Ovary (tissue), 10 donors: ENCODE measurements at regions of chr6 and their contacts with region 1.

Region 1: DNA sequence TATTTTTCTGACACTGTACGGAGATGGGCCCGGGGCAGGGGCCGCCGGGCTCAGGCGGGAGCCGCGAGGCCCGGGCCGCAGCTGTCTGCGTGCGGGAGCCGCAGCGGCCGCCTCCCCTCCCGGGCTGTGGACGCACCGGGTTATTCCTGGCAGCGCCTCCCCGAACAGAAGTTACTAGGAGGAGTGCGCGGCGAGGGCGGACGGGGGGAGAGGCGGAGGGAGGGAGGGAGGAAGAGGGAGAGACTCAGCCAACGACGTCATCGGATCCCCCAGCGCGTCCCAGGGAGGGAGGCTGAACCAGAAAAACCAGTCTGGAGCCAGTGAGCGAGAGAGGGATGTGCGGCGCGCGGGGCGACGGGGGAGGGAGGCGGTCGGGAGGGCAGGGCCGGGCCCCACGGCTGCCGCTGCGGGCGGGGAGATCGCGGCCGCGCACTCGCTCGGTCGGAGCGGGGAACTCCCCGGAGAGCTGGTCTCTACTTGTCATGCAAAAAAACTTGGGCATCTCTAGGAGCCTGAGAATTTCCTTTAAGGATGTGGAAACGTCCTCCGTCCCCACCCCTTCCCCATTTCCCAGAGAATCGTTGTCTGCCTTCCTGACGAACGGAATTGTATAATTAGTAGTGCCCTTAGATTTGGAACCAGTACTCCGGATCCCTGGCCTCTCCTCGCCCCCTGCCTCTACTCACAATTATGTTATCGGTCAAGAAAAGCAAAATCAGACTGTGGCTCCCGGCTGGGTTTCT is 1.4 kb upstream of the HIVEP2 start:
- DNase-seq: peak; percentile 97 to 99 (median 99)
- H3K4me3 ChIP-seq: peak overlapping the region; percentile 88
- H3K27ac ChIP-seq: peak overlapping the region; percentile 99
- H3K4me1 ChIP-seq: no peaks in the 10 kb centered on the region
- H3K27me3 ChIP-seq: no peaks in the 10 kb centered on the region
- CTCF ChIP-seq: peak in 1 of 3 donors; percentile 21
- EP300 ChIP-seq: no peak
- POLR2A ChIP-seq: peak; percentile 95

Region 2: GRCh38 chr6:142692942-142693341 is 253.4 kb before region 1 on chr6:
- intact Hi-C with region 1: loop called in 3 of 4 experiments (anchors 5 to 10 kb)
- DNase-seq: peak; percentile 44 to 76 (median 66)
- H3K4me3 ChIP-seq: no peak overlapping the region
- H3K27ac ChIP-seq: peak overlapping the region in 1 of 2 donors; percentile 4
- H3K4me1 ChIP-seq: peaks cover 8% of the 10 kb centered on the region
- H3K27me3 ChIP-seq: no peaks in the 10 kb centered on the region
- CTCF ChIP-seq: peak; percentile 62 to 92 (median 87)
- EP300 ChIP-seq: no peak
- POLR2A ChIP-seq: no peak

Region 3: DNA sequence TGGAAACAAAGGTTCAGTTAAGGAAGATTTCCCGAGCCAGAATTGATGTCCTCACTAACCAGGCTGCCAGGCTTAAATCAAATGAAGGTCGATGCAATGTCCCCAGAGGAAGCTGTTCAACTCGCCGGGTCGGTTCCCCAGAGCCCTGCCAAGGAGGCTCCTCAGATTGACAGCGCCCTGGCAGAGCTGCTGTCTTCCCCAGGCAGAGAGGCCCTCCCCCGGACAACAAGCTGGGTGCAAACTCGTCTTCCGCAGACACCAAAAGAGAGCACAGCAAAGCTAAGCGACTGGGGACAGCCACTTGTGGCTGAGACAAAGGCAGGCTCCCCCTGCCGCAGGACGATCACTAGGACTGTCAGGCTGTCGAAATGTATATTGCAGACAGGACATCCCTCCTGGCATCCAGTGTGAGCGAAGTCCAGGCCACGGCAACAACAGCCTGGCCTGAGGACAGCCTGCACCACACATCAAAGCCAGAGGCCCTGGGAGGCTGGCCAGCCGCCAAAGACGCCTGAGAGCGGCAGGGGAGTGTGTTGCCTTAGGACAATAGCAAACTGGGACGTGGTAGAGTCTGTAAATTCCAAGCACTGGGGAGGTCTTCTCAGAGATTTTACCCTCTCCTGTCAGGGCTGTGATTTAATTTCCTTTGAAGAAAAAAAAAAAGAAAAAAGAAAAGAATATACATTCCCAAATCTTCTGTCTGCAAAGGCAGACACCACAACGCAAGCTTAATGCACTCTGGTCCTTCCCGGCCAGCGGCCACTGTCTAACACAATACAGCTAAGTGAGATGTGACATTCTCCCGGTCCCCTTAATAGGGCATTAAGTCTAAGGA is 100.5 kb before region 1 on chr6:
- intact Hi-C with region 1: loop called in 1 of 4 experiments (anchors 10 kb)
- DNase-seq: peak; percentile 81 to 92 (median 88)
- H3K4me3 ChIP-seq: peak overlapping the region; percentile 10
- H3K27ac ChIP-seq: peak overlapping the region; percentile 28
- H3K4me1 ChIP-seq: peaks cover 13% of the 10 kb centered on the region
- H3K27me3 ChIP-seq: no peaks in the 10 kb centered on the region
- CTCF ChIP-seq: peak in 1 of 3 donors; percentile 10
- EP300 ChIP-seq: no peak
- POLR2A ChIP-seq: no peak

Region 4: GRCh38 chr6:142885182-142885867 is 61.0 kb before region 1 on chr6:
- intact Hi-C with region 1: loop called (anchors 5 to 10 kb)
- DNase-seq: peak; percentile 36 to 67 (median 48)
- H3K4me3 ChIP-seq: peak overlapping the region; percentile 29
- H3K27ac ChIP-seq: peak overlapping the region in 1 of 2 donors; percentile 58
- H3K4me1 ChIP-seq: peaks cover 2% of the 10 kb centered on the region
- H3K27me3 ChIP-seq: no peaks in the 10 kb centered on the region
- CTCF ChIP-seq: no peak
- EP300 ChIP-seq: no peak
- POLR2A ChIP-seq: peak; percentile 28

Region 5: GRCh38 chr6:142926494-142927270 is 19.7 kb before region 1 on chr6:
- intact Hi-C with region 1: loop called in 2 of 4 experiments (anchors 2 kb)
- DNase-seq: peak; percentile 91 to 94 (median 93)
- H3K4me3 ChIP-seq: peak overlapping the region; percentile 56
- H3K27ac ChIP-seq: peak overlapping the region; percentile 90 to 97
- H3K4me1 ChIP-seq: peaks cover 1% of the 10 kb centered on the region
- H3K27me3 ChIP-seq: no peaks in the 10 kb centered on the region
- CTCF ChIP-seq: no peak
- EP300 ChIP-seq: no peak
- POLR2A ChIP-seq: peak; percentile 64

Region 6: DNA sequence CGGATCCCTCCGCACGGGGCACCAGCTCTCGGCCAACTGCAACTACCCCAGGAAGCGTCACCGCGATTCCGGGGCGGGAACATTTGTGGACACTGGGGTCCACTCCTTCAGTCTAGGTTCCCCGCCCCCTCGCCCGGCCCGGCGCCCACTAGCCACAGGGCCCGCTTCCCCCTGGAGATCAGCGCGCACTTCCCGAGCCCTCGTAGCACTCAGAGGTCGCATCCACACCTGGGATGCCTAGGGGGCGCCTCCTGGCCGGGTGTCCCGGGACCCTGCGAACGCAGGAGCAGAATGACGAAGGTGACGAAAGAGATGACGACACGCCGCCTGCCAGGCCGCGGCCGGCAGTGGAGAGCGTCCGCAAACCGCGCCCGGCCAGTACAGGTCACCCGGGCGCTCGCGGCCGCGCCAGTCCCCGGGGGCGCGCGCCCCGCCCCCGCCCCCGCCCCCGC is 114.0 kb after region 1 on chr6:
- intact Hi-C with region 1: loop called in 2 of 4 experiments (anchors 5 kb)
- DNase-seq: peak; percentile 77 to 88 (median 87)
- H3K4me3 ChIP-seq: peak overlapping the region; percentile 76
- H3K27ac ChIP-seq: peak overlapping the region; percentile 67 to 83
- H3K4me1 ChIP-seq: peaks cover 3% of the 10 kb centered on the region
- H3K27me3 ChIP-seq: no peaks in the 10 kb centered on the region
- CTCF ChIP-seq: peak in 1 of 3 donors; percentile 38
- EP300 ChIP-seq: no peak
- POLR2A ChIP-seq: peak; percentile 69